ENCODE measurements at regions of chr10 and their contacts with region 1.

Region 1: DNA sequence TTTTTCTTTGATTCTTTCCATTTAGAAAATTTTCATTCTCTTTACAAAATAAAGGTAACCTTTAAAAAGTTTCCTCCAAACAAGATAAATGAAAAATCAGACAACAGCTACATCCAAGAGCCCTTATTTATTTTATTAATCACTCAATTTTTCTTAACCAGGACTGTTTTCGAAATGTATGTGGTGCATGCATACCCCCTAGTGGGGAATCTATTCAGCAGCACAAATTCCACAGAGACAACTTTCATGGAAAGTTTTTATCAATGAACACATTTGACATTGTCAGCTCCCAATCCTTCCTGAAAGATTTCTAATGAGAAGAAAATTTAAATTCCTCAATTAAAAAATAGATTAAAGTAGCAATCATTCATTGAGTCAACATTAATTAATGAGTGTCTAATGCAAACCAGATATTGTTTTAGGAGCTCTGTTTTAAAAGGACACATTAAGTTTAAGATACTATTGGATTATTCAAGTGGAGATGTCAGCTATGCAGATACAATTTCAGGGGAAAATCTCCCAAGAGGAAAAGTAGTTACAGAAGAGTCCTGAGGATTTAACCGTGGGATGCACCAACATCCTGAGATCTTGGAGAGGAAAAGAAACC is 5.2 kb upstream of the HTR7 start:
- DNase-seq: peak in 3 of 4 experiments; percentile 13 to 22 (median 19)
- ATAC-seq: 0 out of 3 replicates have a peak, but pooled peaks have one; percentile 44
- H3K4me3 ChIP-seq: no peak overlapping the region
- H3K27ac ChIP-seq: no peak overlapping the region
- H3K4me1 ChIP-seq: peaks cover 0 to 3% of the 10 kb centered on the region in 2 experiments; a peak in 2 of 5 replicates
- H3K27me3 ChIP-seq: no peaks in the 10 kb centered on the region
- CTCF ChIP-seq: peak; percentile 42 to 70 (median 50); a peak in 4 of 6 replicates
- EP300 ChIP-seq: no peak
- POLR2A ChIP-seq: no peak
- RAD21 ChIP-seq: peak; percentile 70 to 73

Region 2: GRCh38 chr10:89426230-89426868 is 1436.7 kb before region 1 on chr10:
- CTCF ChIA-PET with region 1: no interaction called
- POLR2A ChIA-PET with region 1: no interaction called
- in situ Hi-C with region 1: loop called (anchors 25 kb)
- intact Hi-C with region 1: loop called (anchors 5 kb)
- DNase-seq: peak in 2 of 4 experiments; percentile 32 to 46
- ATAC-seq: peak; percentile 84
- H3K4me3 ChIP-seq: no peak overlapping the region
- H3K27ac ChIP-seq: no peak overlapping the region
- H3K4me1 ChIP-seq: no peaks in the 10 kb centered on the region
- H3K27me3 ChIP-seq: peaks cover 0 to 3% of the 10 kb centered on the region in 2 experiments; a peak in 2 of 5 replicates
- CTCF ChIP-seq: peak; percentile 41 to 73 (median 52); a peak in 4 of 6 replicates
- EP300 ChIP-seq: no peak
- POLR2A ChIP-seq: no peak
- RAD21 ChIP-seq: peak; percentile 68 to 81

Region 3: DNA sequence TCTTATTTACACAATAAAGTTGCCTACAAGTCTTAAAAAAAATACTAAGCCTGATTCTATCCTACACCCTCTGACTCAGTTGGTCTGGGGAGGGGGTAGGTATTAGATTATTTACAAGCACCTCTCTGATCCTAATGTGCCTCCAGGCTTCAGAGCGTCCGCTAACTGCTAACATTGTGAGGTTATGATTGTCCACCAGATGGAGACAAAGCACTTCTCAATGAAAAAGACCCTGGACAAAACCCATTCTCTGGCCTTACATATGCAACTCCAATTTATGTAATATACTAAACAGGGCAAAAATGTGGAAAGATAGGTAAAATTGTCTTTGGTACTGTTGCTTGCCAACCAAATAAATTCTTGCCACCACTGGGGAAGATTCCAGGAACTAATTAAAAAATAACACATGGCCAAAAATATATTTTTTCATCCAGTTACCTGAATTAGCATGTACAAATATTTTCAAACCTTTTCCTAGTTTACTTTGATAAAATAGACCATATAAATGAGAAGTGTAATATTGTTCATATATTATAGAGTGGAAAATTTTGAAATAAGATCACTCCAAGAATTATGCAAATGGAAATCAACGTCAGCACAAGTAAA is 1069.3 kb before region 1 on chr10:
- CTCF ChIA-PET with region 1: interaction called, 4 read pairs
- POLR2A ChIA-PET with region 1: no interaction called
- in situ Hi-C with region 1: loop called (anchors 5 kb)
- intact Hi-C with region 1: no loop called
- DNase-seq: peak; percentile 39 to 65 (median 50)
- ATAC-seq: peak; percentile 90
- H3K4me3 ChIP-seq: no peak overlapping the region
- H3K27ac ChIP-seq: no peak overlapping the region
- H3K4me1 ChIP-seq: no peaks in the 10 kb centered on the region; a peak in 2 of 5 replicates
- H3K27me3 ChIP-seq: no peaks in the 10 kb centered on the region
- CTCF ChIP-seq: peak; percentile 57 to 70 (median 57)
- EP300 ChIP-seq: no peak
- POLR2A ChIP-seq: no peak
- RAD21 ChIP-seq: peak; percentile 79 to 85

Region 4: GRCh38 chr10:89954787-89955566 is 908.0 kb before region 1 on chr10:
- CTCF ChIA-PET with region 1: no interaction called
- POLR2A ChIA-PET with region 1: no interaction called
- in situ Hi-C with region 1: no loop called
- intact Hi-C with region 1: loop called (anchors 5 kb)
- DNase-seq: no peak
- ATAC-seq: no peak
- H3K4me3 ChIP-seq: no peak overlapping the region
- H3K27ac ChIP-seq: no peak overlapping the region
- H3K4me1 ChIP-seq: no peaks in the 10 kb centered on the region
- H3K27me3 ChIP-seq: no peaks in the 10 kb centered on the region
- CTCF ChIP-seq: no peak
- EP300 ChIP-seq: no peak
- POLR2A ChIP-seq: no peak
- RAD21 ChIP-seq: peak in 1 of 2 experiments; percentile 23; a peak in 2 of 4 replicates

Region 5: DNA sequence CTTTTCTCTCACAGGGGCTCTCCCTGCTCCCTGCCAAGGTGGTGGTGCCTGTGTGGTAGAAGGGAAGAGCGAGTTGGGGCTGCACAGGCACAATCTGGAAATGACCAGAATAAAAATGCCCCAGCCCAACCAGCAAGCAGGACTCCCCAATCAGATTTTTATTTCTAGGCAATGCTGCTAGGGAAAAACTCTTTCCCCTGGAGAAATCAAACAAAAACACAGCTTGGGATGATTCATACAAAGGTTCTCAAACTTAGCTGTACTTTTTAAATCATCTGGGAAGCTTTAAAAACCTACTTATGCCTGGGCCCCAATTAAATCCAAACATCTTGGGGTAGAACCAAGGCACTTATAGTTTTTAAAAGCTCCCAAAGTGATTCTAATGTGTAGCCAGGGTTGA is 248.4 kb before region 1 on chr10:
- CTCF ChIA-PET with region 1: no interaction called
- POLR2A ChIA-PET with region 1: no interaction called
- in situ Hi-C with region 1: no loop called
- intact Hi-C with region 1: no loop called
- DNase-seq: no peak
- ATAC-seq: no peak
- H3K4me3 ChIP-seq: no peak overlapping the region
- H3K27ac ChIP-seq: no peak overlapping the region
- H3K4me1 ChIP-seq: no peaks in the 10 kb centered on the region
- H3K27me3 ChIP-seq: no peaks in the 10 kb centered on the region
- CTCF ChIP-seq: no peak
- EP300 ChIP-seq: no peak
- POLR2A ChIP-seq: no peak
- RAD21 ChIP-seq: no peak

Region 6: DNA sequence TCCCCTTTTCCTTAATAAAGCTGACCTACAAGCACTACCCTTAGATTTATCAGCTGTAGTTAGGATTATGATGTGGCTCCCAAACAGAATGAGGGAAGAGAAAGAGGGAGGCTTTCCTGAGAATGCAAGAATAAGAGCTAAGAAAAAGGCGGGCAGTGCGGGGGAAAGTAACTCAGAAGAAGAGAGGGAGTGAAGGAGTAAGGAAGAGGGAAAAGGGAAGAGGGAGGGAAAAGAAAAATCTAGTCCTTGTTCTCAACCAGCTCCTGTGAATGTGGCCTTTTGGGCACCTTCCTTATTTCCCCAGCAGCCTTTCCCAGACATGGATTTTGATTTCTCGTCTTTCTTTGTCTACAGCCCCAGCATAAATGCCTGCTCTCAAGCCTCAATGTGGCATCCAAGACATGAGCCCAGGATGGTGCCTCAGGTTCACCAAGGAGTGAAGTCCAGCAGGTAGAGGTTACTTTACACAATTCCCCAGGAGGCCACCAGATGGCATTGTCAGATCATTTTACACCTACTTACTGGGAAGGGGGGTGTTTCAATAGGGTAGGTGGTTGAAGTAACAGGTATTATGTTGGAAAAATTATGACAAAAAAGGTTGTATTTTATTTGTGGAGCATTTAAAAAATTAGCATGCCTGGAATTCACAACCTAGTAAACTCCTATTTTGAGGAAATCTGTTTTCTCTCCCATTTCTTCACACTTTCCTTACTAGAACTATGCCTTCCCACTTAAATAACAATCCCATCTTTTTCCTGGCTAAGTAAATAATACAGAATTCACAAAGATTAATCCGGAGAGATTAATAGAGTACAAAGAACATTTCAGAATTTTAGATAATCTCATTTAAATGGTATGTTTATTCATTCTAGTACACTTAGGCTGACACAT is 111.7 kb before region 1 on chr10:
- CTCF ChIA-PET with region 1: interaction called, 7 read pairs
- POLR2A ChIA-PET with region 1: no interaction called
- in situ Hi-C with region 1: loop called (anchors 10 kb)
- intact Hi-C with region 1: loop called (anchors 1 kb)
- DNase-seq: peak; percentile 32 to 58 (median 38)
- ATAC-seq: peak; percentile 86
- H3K4me3 ChIP-seq: no peak overlapping the region
- H3K27ac ChIP-seq: no peak overlapping the region
- H3K4me1 ChIP-seq: no peaks in the 10 kb centered on the region
- H3K27me3 ChIP-seq: no peaks in the 10 kb centered on the region
- CTCF ChIP-seq: peak; percentile 44 to 65 (median 57); a peak in 5 of 6 replicates
- EP300 ChIP-seq: no peak
- POLR2A ChIP-seq: no peak
- RAD21 ChIP-seq: peak; percentile 54 to 68

Region 7: DNA sequence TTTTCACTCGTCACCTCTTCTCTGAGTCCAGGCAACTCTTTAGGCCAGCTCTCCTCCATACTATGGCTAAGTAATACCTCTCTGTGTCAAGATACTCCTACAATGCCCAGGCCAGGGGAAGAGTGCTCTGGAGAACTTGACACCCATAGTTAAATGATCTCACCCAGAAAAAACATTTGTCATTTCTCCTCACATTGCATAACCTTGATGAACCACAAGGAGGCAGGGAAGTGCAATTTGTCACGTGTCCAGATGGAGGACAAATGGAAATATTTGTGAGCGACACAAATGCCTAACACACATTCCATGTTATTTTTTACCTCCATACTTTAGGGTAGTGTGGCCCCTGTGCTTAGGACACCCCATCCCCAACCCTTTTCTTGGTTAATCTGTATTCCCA is 83.5 kb before region 1 on chr10:
- CTCF ChIA-PET with region 1: interaction called, 3 read pairs
- POLR2A ChIA-PET with region 1: no interaction called
- in situ Hi-C with region 1: no loop called
- intact Hi-C with region 1: loop called (anchors 2 kb)
- DNase-seq: peak; percentile 6 to 24 (median 12)
- ATAC-seq: peak; percentile 76
- H3K4me3 ChIP-seq: no peak overlapping the region
- H3K27ac ChIP-seq: no peak overlapping the region
- H3K4me1 ChIP-seq: no peaks in the 10 kb centered on the region
- H3K27me3 ChIP-seq: no peaks in the 10 kb centered on the region; a peak in 1 of 5 replicates
- CTCF ChIP-seq: peak; percentile 46 to 63 (median 57); a peak in 4 of 6 replicates
- EP300 ChIP-seq: no peak
- POLR2A ChIP-seq: no peak
- RAD21 ChIP-seq: peak in 1 of 2 experiments; percentile 45; a peak in 1 of 4 replicates

Measured in K562 (cell line).